Activated B cell treated with CpG ODN at 0.5 μM for 24 hours (primary cell): ENCODE measurements at regions of chr6 and their contacts with region 1.

Region 1: GRCh38 chr6:106223300-106223930 is 102.1 kb downstream of the ATG5 start:
- DNase-seq: no peak
- ATAC-seq: peak; percentile 72
- H3K4me3 Mint-ChIP-seq: no peak overlapping the region
- H3K27ac Mint-ChIP-seq: no peak overlapping the region
- H3K4me1 Mint-ChIP-seq: peaks cover 8% of the 10 kb centered on the region
- H3K27me3 Mint-ChIP-seq: no peaks in the 10 kb centered on the region
- CTCF ChIP-seq: peak; percentile 17

Region 2: DNA sequence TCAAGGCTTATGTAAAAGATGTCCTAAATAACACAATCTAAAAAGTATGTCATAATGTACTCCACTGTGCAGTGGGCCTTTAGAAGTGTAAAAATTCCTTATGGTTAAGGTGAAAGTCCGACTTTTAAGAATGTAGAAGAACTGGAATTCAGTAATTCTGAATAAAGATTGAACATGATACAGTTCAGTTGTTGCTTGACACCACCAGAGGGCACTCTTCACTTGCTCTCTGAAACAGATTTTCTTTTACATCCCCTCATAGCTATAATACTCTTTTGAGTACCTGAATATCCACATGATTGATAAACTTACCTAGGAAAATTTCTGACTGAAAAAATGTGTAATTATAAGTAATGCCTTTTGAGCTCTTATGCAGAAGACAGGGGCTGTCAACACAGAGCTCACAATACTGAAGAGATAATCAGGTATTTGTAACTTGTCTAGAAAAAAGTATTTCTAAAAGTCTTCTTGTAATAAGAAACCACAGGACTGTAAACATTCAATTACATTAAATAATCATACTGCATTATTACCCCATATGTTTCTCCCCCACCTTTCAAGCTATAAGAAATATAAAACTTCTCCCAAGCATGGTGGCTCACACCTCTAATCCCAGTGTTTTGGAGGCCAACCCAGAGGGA is 1135.7 kb before region 1 on chr6:
- CTCF ChIA-PET with region 1: interaction called, 5 read pairs
- POLR2A ChIA-PET with region 1: no interaction called
- intact Hi-C with region 1: loop called (anchors 2 kb)
- DNase-seq: no peak
- ATAC-seq: no peak
- H3K4me3 Mint-ChIP-seq: no peak overlapping the region
- H3K27ac Mint-ChIP-seq: no peak overlapping the region
- H3K4me1 Mint-ChIP-seq: no peaks in the 10 kb centered on the region
- H3K27me3 Mint-ChIP-seq: no peaks in the 10 kb centered on the region
- CTCF ChIP-seq: no peak

Region 3: DNA sequence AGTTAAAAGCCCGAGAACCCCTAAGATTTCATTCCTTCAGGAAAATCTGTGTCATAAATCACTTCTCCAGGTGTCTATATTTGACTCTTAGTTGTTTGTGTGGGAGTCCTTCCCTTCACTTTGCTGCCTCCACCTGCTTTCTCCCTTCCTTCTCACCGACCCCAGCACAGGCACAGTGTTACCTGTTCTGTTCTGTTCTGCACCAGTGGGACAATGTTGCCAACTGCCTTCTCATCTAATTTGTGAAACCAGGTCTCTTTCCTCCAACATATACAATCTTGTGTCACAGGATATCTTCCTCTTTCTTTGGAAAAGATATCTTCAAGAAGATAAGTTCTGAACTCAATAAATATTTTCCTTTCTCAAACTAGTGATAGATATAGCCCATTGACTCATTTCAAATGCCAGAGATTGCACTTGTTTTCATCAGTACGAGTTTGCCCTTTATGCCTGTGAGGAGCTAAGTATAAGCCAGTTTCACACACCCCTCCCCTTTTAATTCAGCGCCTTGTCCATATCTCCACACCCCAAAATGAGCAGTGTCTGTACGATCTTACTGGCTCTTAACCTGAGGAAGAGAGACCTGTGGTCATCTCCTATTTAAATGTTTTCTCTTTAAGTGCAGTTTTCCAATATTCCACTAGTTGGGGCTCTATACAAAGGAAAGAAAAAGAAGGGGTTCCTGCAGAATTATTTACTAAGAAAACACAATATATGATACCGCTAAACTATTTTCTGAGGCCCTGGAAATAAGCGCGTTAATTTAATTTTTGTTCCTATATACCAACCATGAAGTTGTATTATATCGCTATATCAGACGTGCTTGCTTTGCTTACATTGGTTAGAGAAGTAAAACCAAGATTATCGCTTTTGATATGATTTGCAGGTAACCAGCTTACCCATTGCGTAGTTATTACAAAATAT is 738.9 kb before region 1 on chr6:
- CTCF ChIA-PET with region 1: interaction called, 4 read pairs
- POLR2A ChIA-PET with region 1: no interaction called
- intact Hi-C with region 1: loop called (anchors 1 kb)
- DNase-seq: no peak
- ATAC-seq: no peak
- H3K4me3 Mint-ChIP-seq: no peak overlapping the region
- H3K27ac Mint-ChIP-seq: no peak overlapping the region
- H3K4me1 Mint-ChIP-seq: peaks cover 2% of the 10 kb centered on the region
- H3K27me3 Mint-ChIP-seq: peaks cover 6% of the 10 kb centered on the region
- CTCF ChIP-seq: no peak

Region 4: GRCh38 chr6:105793130-105793529 is 430.3 kb before region 1 on chr6:
- CTCF ChIA-PET with region 1: interaction called, 8 read pairs
- POLR2A ChIA-PET with region 1: no interaction called
- intact Hi-C with region 1: loop called (anchors 1 kb)
- DNase-seq: no peak
- ATAC-seq: peak; percentile 88
- H3K4me3 Mint-ChIP-seq: no peak overlapping the region
- H3K27ac Mint-ChIP-seq: no peak overlapping the region
- H3K4me1 Mint-ChIP-seq: peaks cover 20% of the 10 kb centered on the region
- H3K27me3 Mint-ChIP-seq: no peaks in the 10 kb centered on the region
- CTCF ChIP-seq: no peak

Region 5: GRCh38 chr6:106097411-106098231 is 125.8 kb before region 1 on chr6:
- CTCF ChIA-PET with region 1: interaction called, 25 read pairs
- POLR2A ChIA-PET with region 1: interaction called, 7 read pairs
- intact Hi-C with region 1: loop called (anchors 2 kb)
- DNase-seq: no peak
- ATAC-seq: peak; percentile 74
- H3K4me3 Mint-ChIP-seq: peak overlapping the region; percentile 89
- H3K27ac Mint-ChIP-seq: peak overlapping the region; percentile 94
- H3K4me1 Mint-ChIP-seq: peaks cover 84% of the 10 kb centered on the region
- H3K27me3 Mint-ChIP-seq: no peaks in the 10 kb centered on the region
- CTCF ChIP-seq: no peak

Region 6: GRCh38 chr6:106163446-106163965 is 59.9 kb before region 1 on chr6:
- CTCF ChIA-PET with region 1: interaction called, 13 read pairs
- POLR2A ChIA-PET with region 1: interaction called, 5 read pairs
- intact Hi-C with region 1: loop called (anchors 2 kb)
- DNase-seq: peak; percentile 37
- ATAC-seq: peak; percentile 57
- H3K4me3 Mint-ChIP-seq: peak overlapping the region; percentile 36
- H3K27ac Mint-ChIP-seq: peak overlapping the region; percentile 92
- H3K4me1 Mint-ChIP-seq: peaks cover 35% of the 10 kb centered on the region
- H3K27me3 Mint-ChIP-seq: no peaks in the 10 kb centered on the region
- CTCF ChIP-seq: no peak

Region 7: GRCh38 chr6:106858653-106859092 is 635.3 kb after region 1 on chr6:
- CTCF ChIA-PET with region 1: no interaction called
- POLR2A ChIA-PET with region 1: no interaction called
- intact Hi-C with region 1: no loop called
- DNase-seq: no peak
- ATAC-seq: no peak
- H3K4me3 Mint-ChIP-seq: no peak overlapping the region
- H3K27ac Mint-ChIP-seq: no peak overlapping the region
- H3K4me1 Mint-ChIP-seq: no peaks in the 10 kb centered on the region
- H3K27me3 Mint-ChIP-seq: no peaks in the 10 kb centered on the region
- CTCF ChIP-seq: no peak